ENCODE measurements at regions of chr2 and their contacts with region 1.

Region 1: GRCh38 chr2:169877398-169877797 is 50.1 kb downstream of the UBR3 start:
- DNase-seq: no peak
- ATAC-seq: peak in 1 of 2 donors; percentile 38

Region 2: DNA sequence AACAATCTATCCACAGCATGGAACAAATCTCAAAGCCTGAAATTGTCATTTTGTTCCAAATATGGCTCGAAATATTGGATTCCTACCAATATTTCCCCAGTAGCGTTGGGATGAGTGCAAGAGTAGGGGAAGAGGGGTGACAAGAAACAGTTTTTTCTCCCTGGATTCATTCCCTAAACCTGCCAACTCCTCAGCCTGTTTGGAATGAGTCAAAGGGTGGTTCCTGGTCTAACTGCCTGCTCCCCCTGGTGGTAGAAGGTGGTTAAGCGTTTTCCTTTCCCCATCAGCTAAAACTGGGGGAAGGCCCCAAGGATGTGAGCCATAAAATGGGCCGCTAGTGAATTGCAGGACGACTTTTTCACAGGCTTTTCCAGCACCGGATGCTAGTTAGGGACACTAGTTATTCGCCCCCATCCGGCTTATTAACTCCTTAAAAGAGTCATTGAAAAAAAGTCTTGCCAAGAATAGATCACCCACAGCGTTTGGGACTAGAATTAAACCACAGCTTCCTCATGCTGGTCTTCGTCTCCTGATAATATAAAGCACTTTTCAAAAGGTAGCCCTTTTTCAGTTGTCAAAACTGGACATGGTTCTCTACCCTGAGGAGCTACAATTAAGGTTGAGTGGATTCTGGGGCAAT is 735.6 kb before region 1 on chr2:
- intact Hi-C with region 1: no loop called
- DNase-seq: peak; percentile 47
- ATAC-seq: peak; percentile 49 to 71

Region 3: DNA sequence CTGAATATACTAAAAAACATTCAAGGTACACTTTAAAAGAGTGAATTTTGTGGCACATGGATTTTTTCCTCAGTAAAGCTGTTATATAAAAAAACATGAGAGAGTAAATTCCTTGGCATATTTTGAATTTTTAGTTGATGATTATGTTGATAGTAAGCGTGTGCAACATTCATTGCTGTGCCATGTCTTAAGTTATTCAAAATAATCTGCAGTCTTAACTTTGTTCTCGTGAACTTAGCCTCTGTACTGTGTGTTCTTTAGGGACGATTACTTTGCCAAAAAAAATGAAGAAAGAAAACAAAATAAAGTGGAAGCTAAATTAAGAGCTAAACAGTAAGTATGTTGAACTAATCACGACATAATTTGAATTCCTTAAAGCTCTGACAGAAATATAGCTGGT is 69.2 kb before region 1 on chr2:
- intact Hi-C with region 1: no loop called
- DNase-seq: no peak
- ATAC-seq: peak in 1 of 2 donors; percentile 50

Region 4: DNA sequence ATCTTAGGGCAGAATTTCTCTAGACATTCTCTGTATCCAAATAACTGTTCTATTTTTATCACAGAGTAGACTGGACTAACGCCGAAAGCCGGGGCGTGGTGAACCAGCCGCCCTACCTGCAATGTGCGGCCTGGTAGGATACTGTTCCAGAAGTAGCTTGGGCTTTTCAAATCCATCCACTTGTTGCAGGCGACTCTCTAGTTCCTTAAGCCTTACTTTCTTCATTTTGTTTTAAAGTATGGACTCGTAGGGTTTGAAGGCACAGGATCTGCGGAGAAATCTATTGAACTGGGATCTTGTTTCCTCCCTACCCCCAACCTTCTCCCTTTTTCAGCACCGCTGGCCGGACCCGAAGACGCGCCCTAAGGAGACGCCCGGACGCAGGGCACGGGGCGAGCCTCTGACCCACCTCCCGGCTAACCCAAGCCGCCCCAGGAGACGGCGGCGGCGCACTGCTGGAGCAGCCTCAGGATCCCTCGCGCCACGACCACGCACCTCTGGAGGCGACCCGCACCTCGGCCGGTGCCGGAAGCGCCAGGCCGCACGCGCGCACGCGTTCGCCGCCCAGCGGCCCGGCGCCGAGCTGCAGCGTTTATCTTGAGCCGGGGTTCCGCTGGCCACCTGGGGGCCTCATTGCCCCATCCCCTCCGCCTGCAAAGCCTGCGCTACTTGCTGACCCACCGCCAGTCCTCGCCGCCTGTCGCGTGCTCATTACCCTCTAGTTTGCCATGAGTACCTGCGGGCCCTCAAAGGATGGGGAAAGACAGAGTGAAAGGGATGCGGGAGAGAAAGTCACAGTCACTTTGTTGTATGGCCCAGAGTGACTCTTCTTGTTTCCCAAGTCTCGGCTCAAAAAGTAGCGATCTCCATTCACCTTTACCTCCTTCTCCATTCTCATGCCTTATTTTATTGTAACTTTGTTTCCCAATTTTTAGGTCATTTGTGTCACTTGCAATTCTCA is 52.7 kb before region 1 on chr2 and contains the start of gene METTL5:
- intact Hi-C with region 1: loop called in 1 of 2 experiments (anchors 5 kb)
- DNase-seq: peak; percentile 87
- ATAC-seq: peak; percentile 69 to 75
- total RNA-seq, gene METTL5: 51.5 to 55.2 TPM

Region 5: DNA sequence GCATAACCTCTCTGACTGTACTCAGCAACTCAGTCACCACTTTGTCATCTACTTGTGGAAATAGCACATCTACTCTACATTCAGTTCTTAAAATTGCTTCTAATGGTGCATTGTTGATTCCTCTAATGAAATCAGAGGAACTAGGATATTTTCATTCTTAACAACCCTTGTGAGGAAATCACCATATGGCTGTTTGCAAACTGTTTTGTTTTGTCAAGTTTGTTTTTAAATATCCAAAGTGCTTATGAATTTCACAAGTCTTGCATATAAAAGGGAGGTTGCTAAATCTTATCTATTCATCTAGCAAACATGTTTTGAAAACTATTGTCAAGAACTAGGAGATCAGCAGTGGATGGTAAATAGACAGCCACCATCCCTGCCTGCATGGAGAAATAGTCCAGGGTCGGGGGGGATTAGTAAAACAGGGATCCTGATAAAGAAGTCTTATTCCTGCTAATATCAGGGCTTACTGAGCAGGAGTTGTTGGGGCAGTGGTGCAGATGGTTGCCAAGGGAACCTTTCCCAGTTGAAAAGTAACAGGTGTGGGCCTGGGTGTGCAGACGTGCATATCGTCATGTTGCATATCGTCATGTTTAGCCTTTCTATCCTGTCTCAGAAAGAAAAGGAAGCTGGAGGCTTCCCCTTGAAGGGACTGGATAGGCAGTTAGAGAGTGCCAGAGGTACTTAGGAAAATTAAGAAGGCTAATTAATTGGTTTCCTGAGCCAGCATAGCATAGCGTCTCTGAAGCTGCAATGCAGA is 293.1 kb after region 1 on chr2:
- intact Hi-C with region 1: no loop called
- DNase-seq: no peak
- ATAC-seq: no peak

Region 6: DNA sequence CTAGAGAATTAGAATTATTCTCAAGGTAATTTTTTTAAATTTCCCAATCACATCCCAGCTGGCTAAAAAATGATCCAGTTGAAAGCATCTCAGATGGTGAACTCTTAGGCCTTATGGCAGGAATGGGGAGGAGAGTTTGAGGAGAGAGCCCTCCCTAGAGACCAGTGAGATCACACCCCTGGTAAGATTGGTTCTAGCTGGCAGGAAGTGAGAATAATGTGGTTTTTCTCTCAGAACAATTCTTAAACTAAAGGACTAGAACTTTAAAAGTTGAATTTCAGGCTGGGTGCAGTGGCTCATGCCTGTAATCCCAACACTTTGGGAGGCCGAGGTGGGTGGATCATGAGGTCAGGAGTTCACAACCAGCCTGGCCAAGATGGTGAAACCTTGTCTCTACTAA is 420.7 kb after region 1 on chr2:
- intact Hi-C with region 1: no loop called
- DNase-seq: no peak
- ATAC-seq: no peak